Mammary epithelial cell (primary cell): ENCODE measurements at regions of chr22 and their contacts with region 1.

Region 1: GRCh38 chr22:48347311-48347710 is 1480.4 kb downstream of the BRD1 start:
- DNase-seq: no peak
- H3K4me3 ChIP-seq: no peak overlapping the region
- H3K27ac ChIP-seq: no peak overlapping the region
- H3K4me1 ChIP-seq: no peaks in the 10 kb centered on the region
- H3K27me3 ChIP-seq: no peaks in the 10 kb centered on the region
- CTCF ChIP-seq: no peak

Region 2: DNA sequence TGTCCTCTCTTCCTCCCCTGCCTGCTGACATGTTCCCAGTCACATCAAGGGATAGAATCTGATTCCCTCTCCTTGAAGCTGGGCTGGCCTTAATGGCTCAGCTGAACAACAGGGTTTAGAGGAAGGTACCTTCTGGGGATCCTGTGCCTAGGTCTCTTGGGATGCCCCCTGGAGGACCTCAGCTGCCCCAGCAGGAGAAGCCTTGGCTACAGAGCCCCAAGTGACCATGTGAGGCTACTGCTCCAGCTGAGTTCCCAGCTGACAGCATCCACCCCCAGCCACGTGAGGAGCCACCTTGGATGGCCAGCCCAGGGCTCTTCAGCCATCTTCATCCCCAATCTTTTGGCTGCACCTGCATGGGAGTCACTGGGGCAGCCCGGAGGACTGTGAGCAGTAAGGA is 85.6 kb before region 1 on chr22:
- CTCF ChIA-PET with region 1: no interaction called
- dilution Hi-C with region 1: loop called (anchors 5 kb)
- in situ Hi-C with region 1: no loop called
- intact Hi-C with region 1: no loop called
- DNase-seq: no peak
- H3K4me3 ChIP-seq: no peak overlapping the region
- H3K27ac ChIP-seq: no peak overlapping the region
- H3K4me1 ChIP-seq: no peaks in the 10 kb centered on the region
- H3K27me3 ChIP-seq: no peaks in the 10 kb centered on the region
- CTCF ChIP-seq: no peak

Region 3: DNA sequence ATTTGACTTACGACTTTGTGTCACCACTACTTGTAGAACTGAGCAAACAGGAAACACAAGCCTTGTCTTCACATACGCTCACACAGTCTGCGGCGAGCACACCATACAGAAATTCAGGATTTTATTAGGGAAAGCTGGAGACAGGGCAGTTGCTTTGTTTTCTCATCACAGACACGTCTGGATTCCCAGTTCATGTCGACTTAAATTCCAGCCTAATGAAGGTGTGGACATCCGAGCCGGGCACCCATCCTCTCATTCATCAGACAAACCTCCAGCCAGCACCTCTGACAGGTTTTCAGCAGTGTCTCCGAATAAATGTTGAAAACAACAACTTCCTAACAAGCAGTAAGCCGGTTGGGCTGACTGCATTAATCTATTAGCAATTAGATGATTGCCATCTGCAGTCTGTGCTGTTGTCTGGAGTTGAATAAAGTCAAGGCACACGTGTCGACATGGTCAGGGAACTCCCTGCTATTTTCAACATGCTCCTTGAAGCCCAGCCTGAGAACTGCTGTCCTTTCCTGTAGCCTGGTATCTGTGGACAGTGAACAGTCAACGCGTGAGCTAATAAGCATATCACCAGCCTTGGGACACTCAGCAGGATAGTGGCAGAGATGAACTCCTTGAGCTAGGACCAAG is 69.4 kb after region 1 on chr22:
- CTCF ChIA-PET with region 1: no interaction called
- dilution Hi-C with region 1: loop called (anchors 5 kb)
- in situ Hi-C with region 1: no loop called
- intact Hi-C with region 1: no loop called
- DNase-seq: no peak
- H3K4me3 ChIP-seq: no peak overlapping the region
- H3K27ac ChIP-seq: no peak overlapping the region
- H3K4me1 ChIP-seq: no peaks in the 10 kb centered on the region
- H3K27me3 ChIP-seq: no peaks in the 10 kb centered on the region
- CTCF ChIP-seq: no peak